ENCODE measurements at regions of chr13 and their contacts with region 1.

Region 1: DNA sequence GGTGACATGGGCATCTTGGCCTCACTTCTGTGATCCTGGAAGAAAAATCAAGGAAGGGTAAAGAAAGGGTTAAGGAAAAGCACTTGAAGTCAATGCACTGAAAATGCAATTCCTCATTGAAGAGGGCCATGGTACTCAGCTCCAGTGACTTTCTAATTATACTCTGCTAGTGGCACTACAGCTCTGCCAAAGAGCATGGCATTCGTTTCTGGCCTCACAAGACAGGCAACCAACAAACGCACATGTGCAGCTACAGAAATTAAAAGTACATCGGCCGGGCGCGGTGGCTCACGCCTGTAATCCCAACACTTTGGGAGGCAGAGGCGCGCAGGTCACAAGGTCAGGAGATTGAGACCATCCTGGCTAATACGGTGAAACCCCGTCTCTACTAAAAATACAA is 21.8 kb downstream of the SACS start:
- DNase-seq: no peak
- ATAC-seq: no peak
- H3K4me3 ChIP-seq: no peak overlapping the region
- H3K4me3 Mint-ChIP-seq: no peak overlapping the region
- H3K27ac ChIP-seq: no peak overlapping the region
- H3K27ac Mint-ChIP-seq: no peak overlapping the region
- H3K4me1 ChIP-seq: no peaks in the 10 kb centered on the region
- H3K4me1 Mint-ChIP-seq: peaks cover 0 to 3% (median 0%) of the 10 kb centered on the region in 7 donors
- H3K27me3 ChIP-seq: no peaks in the 10 kb centered on the region
- H3K27me3 Mint-ChIP-seq: peaks cover 4 to 17% (median 6%) of the 10 kb centered on the region in 5 donors

Region 2: GRCh38 chr13:23899555-23899954 is 487.8 kb after region 1 on chr13:
- CTCF ChIA-PET with region 1: no interaction called
- POLR2A ChIA-PET with region 1: no interaction called
- intact Hi-C with region 1: loop called in 1 of 2 experiments (anchors 1 kb)
- DNase-seq: peak in 5 of 9 donors; percentile 12 to 41 (median 28)
- ATAC-seq: peak; percentile 74
- H3K4me3 ChIP-seq: no peak overlapping the region
- H3K4me3 Mint-ChIP-seq: no peak overlapping the region
- H3K27ac ChIP-seq: no peak overlapping the region
- H3K27ac Mint-ChIP-seq: no peak overlapping the region
- H3K4me1 ChIP-seq: no peaks in the 10 kb centered on the region
- H3K4me1 Mint-ChIP-seq: peaks cover 0 to 10% (median 3%) of the 10 kb centered on the region in 7 donors
- H3K27me3 ChIP-seq: peaks cover 0 to 10% of the 10 kb centered on the region in 2 donors
- H3K27me3 Mint-ChIP-seq: peaks cover 26 to 42% (median 37%) of the 10 kb centered on the region in 5 donors